B cell (primary cell): ENCODE measurements at regions of chr5 and their contacts with region 1.

Region 1: GRCh38 chr5:119274767-119275130 is 81.1 kb upstream of the TNFAIP8 start:
- DNase-seq: peak; percentile 52
- ATAC-seq: peak; percentile 42
- H3K4me3 ChIP-seq: peak overlapping the region in 1 of 5 experiments; percentile 43
- H3K4me3 Mint-ChIP-seq: peak overlapping the region; percentile 75
- H3K27ac ChIP-seq: peak overlapping the region; percentile 78 to 91
- H3K27ac Mint-ChIP-seq: peak overlapping the region; percentile 95
- H3K4me1 ChIP-seq: peaks cover 94 to 97% of the 10 kb centered on the region in 2 donors
- H3K4me1 Mint-ChIP-seq: peaks cover 97% of the 10 kb centered on the region
- H3K27me3 ChIP-seq: no peaks in the 10 kb centered on the region
- H3K27me3 Mint-ChIP-seq: no peaks in the 10 kb centered on the region
- CTCF ChIP-seq: no peak

Region 2: DNA sequence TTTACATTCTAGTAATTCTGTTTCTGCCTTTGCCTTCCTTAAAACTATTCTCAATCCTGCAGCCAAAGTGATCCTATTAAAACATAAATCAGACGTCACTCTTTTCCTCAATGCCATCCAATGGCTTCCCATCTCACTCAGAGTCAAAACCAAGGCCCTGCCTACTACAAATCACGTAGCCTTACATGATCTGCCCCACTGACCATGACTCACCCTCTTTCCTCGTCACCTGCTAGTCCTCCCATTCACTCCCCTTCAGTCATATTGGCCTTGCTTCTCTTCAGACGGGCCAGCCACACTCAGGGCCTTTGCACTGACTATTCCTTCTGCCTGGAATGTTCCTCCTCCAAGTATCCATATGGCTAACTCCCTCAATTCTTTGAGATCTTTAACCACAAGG is 242.8 kb before region 1 on chr5:
- CTCF ChIA-PET with region 1: no interaction called
- POLR2A ChIA-PET with region 1: no interaction called
- intact Hi-C with region 1: loop called (anchors 5 kb)
- DNase-seq: peak; percentile 63
- ATAC-seq: peak; percentile 80
- H3K4me3 ChIP-seq: peak overlapping the region in 1 of 5 experiments; percentile 54
- H3K4me3 Mint-ChIP-seq: peak overlapping the region; percentile 81
- H3K27ac ChIP-seq: peak overlapping the region; percentile 82 to 83
- H3K27ac Mint-ChIP-seq: peak overlapping the region; percentile 95
- H3K4me1 ChIP-seq: peaks cover 38 to 52% of the 10 kb centered on the region in 2 donors
- H3K4me1 Mint-ChIP-seq: peaks cover 50% of the 10 kb centered on the region
- H3K27me3 ChIP-seq: no peaks in the 10 kb centered on the region
- H3K27me3 Mint-ChIP-seq: no peaks in the 10 kb centered on the region
- CTCF ChIP-seq: no peak

Region 3: DNA sequence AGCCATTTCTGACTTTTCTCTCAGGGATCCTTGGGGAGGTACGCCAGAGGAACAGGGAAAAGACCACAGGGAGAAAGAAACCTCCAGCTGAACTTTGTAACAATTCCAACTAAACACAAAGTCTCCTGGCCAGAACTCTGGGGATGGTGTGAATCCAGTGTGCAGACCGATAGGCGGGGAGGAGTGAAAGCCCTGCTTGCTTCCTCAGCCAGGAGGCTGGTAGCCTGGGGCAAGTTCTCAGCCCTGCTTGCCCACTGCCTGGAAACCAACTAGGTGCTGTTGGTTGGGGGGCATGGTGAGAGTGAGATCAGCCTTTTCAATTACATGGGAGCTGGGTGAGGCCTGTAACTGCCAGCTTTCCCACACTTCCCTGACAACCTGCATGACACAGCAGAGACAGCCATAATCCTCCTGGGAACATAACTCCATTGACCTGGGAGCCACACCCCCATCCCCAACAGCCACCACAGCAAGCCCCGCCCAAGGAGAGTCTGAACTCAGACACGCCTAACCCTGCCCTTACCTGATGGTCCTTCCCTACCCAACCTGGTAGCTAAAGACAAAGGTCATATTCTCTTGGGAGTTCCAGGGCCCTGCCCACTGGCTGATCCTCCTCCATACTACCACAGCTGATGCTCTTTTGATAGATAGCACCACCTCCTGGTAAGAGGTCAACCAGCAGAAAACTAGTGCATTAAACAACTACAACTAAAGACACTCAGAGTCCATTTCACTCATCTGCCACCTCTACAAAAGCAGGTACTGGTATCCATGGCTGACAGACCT is 19.0 kb before region 1 on chr5:
- CTCF ChIA-PET with region 1: interaction called, 3 read pairs
- POLR2A ChIA-PET with region 1: interaction called, 12 read pairs
- intact Hi-C with region 1: no loop called
- DNase-seq: peak; percentile 24
- ATAC-seq: no peak
- H3K4me3 ChIP-seq: no peak overlapping the region
- H3K4me3 Mint-ChIP-seq: no peak overlapping the region
- H3K27ac ChIP-seq: no peak overlapping the region
- H3K27ac Mint-ChIP-seq: peak overlapping the region; percentile 26
- H3K4me1 ChIP-seq: no peaks in the 10 kb centered on the region
- H3K4me1 Mint-ChIP-seq: peaks cover 3% of the 10 kb centered on the region
- H3K27me3 ChIP-seq: no peaks in the 10 kb centered on the region
- H3K27me3 Mint-ChIP-seq: no peaks in the 10 kb centered on the region
- CTCF ChIP-seq: peak; percentile 8

Region 4: GRCh38 chr5:119309326-119309725 is 34.6 kb after region 1 on chr5:
- CTCF ChIA-PET with region 1: interaction called, 4 read pairs
- POLR2A ChIA-PET with region 1: interaction called, 4 read pairs
- intact Hi-C with region 1: loop called (anchors 2 kb)
- DNase-seq: peak; percentile 48
- ATAC-seq: peak; percentile 31
- H3K4me3 ChIP-seq: peak overlapping the region in 3 of 5 experiments; percentile 1 to 46 (median 1)
- H3K4me3 Mint-ChIP-seq: peak overlapping the region; percentile 83
- H3K27ac ChIP-seq: peak overlapping the region; percentile 67 to 88
- H3K27ac Mint-ChIP-seq: peak overlapping the region; percentile 96
- H3K4me1 ChIP-seq: peaks cover 85 to 99% of the 10 kb centered on the region in 2 donors
- H3K4me1 Mint-ChIP-seq: peaks cover 89% of the 10 kb centered on the region
- H3K27me3 ChIP-seq: no peaks in the 10 kb centered on the region
- H3K27me3 Mint-ChIP-seq: no peaks in the 10 kb centered on the region
- CTCF ChIP-seq: no peak

Region 5: DNA sequence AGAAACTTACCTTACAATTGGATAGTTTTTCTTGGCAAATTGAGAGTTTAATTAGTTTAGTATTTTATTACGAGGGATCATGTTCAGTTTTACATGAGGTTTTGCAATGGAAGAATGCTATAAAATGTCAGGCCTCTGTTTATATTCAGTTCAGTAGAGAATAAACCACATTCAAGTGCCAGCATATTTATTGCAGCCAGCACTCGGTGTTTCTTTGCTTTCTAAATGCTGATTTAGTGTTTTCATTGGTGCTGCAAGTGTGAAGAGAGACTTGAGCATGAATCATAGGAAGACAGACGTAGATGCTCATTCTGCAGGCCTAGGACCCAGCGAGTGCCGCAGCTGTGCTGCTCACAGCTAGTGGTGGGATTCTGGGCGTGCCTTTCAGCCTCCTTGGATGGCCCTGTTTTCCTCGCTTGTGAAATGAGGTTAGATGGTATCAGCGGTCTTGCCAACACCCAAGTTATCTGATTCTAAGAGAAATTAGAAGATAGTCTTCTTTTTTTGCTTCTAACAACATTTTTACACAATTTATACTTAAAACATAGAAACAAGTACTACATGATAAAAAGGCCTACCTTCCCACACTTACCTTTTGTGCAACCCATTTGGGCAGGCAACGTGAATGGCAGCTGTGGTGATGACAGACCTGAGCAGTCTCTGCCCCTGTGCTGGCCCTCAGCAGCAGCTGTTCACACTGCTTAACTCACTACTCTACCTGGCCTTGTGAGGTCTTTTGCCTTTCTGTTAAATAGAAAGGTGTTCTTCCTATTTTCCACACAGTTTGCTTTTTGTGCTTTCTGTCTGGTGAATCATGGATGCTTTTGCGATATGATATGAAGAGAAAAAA is 54.2 kb after region 1 on chr5:
- CTCF ChIA-PET with region 1: interaction called, 11 read pairs
- POLR2A ChIA-PET with region 1: interaction called, 7 read pairs
- intact Hi-C with region 1: no loop called
- DNase-seq: no peak
- ATAC-seq: no peak
- H3K4me3 ChIP-seq: no peak overlapping the region
- H3K4me3 Mint-ChIP-seq: no peak overlapping the region
- H3K27ac ChIP-seq: peak overlapping the region in 1 of 2 donors; percentile 79
- H3K27ac Mint-ChIP-seq: peak overlapping the region; percentile 86
- H3K4me1 ChIP-seq: peaks cover 79 to 84% of the 10 kb centered on the region in 2 donors
- H3K4me1 Mint-ChIP-seq: peaks cover 88% of the 10 kb centered on the region
- H3K27me3 ChIP-seq: no peaks in the 10 kb centered on the region
- H3K27me3 Mint-ChIP-seq: no peaks in the 10 kb centered on the region
- CTCF ChIP-seq: no peak